ENCODE measurements at regions of chr10 and their contacts with region 1.

Region 1: GRCh38 chr10:87079106-87079836 is 15.4 kb downstream of the GLUD1 start:
- DNase-seq: no peak
- H3K4me3 ChIP-seq: no peak overlapping the region
- H3K4me3 Mint-ChIP-seq: no peak overlapping the region
- H3K27ac Mint-ChIP-seq: no peak overlapping the region
- H3K4me1 ChIP-seq: peaks cover 13% of the 10 kb centered on the region; the same call in 1 of the 2 replicates
- H3K4me1 Mint-ChIP-seq: peaks cover 20% of the 10 kb centered on the region
- H3K27me3 ChIP-seq: no peaks in the 10 kb centered on the region
- H3K27me3 Mint-ChIP-seq: no peaks in the 10 kb centered on the region
- CTCF ChIP-seq: no peak

Region 2: GRCh38 chr10:86846088-86846487 is 233.2 kb before region 1 on chr10:
- CTCF ChIA-PET with region 1: no interaction called
- POLR2A ChIA-PET with region 1: no interaction called
- intact Hi-C with region 1: no loop called
- DNase-seq: no peak
- H3K4me3 ChIP-seq: no peak overlapping the region
- H3K4me3 Mint-ChIP-seq: no peak overlapping the region
- H3K27ac Mint-ChIP-seq: no peak overlapping the region
- H3K4me1 ChIP-seq: no peaks in the 10 kb centered on the region
- H3K4me1 Mint-ChIP-seq: peaks cover 10% of the 10 kb centered on the region
- H3K27me3 ChIP-seq: no peaks in the 10 kb centered on the region
- H3K27me3 Mint-ChIP-seq: no peaks in the 10 kb centered on the region
- CTCF ChIP-seq: no peak

Region 3: DNA sequence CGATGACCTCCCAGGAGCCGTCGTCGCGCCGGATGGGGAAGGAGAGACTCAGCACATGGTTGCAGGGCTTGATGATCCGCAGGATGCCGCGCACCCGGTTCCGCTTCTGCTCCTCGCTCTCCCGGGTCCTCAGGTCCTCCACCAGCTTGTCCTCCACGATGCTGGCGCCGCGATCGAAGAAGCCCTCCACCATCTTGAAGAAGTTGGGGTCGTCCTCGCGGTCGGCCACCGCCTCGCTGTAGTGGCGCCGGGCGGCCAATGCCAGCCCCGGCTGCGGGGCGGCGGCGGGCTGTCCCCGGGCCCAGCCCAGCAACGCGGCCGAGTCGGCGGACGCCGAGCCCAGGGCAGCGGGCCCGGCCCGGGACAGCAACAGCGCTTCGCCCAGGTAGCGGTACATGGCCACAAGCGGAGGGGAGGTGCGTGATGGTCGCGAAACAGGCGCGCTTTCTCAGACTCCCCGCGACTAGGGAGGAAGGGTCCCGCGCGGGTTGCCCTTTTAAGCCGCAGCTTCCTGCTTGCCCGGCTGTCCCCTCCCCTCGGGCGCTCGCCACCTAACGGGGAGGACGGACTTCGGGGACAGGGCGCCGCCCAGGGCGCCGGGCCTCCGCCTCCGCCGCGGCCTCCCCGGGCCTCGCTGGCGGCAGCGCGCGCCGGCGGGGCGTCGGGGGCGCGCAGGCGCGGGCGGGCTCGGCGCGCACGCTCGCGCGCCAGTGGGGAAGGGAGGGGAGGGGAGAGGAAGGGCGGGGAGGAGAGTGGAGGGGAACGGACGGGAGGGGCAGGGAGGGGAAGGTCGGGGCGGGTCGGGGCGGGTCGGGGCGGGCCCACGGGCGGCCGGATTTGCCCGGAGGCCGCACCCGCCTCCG is 15.3 kb after region 1 on chr10 and contains the starts of genes GLUD1 and SHLD2:
- CTCF ChIA-PET with region 1: no interaction called
- POLR2A ChIA-PET with region 1: interaction called, 10 read pairs
- intact Hi-C with region 1: no loop called
- DNase-seq: peak; percentile 96 to 97
- H3K4me3 ChIP-seq: peak within 1 kb of the TSS; percentile 96
- H3K4me3 Mint-ChIP-seq: peak within 1 kb of the TSS; percentile 88
- H3K27ac Mint-ChIP-seq: peak within 1 kb of the TSS; percentile 77
- H3K4me1 ChIP-seq: peaks cover 33% of the 10 kb centered on the region
- H3K4me1 Mint-ChIP-seq: peaks cover 24% of the 10 kb centered on the region
- H3K27me3 ChIP-seq: no peaks in the 10 kb centered on the region
- H3K27me3 Mint-ChIP-seq: no peaks in the 10 kb centered on the region
- CTCF ChIP-seq: peak in 1 of 2 experiments; percentile 4
- total RNA-seq, gene GLUD1: 767 and 787 TPM in 2 replicates
- total RNA-seq, gene SHLD2: 49.3 and 51.0 TPM in 2 replicates

Region 4: DNA sequence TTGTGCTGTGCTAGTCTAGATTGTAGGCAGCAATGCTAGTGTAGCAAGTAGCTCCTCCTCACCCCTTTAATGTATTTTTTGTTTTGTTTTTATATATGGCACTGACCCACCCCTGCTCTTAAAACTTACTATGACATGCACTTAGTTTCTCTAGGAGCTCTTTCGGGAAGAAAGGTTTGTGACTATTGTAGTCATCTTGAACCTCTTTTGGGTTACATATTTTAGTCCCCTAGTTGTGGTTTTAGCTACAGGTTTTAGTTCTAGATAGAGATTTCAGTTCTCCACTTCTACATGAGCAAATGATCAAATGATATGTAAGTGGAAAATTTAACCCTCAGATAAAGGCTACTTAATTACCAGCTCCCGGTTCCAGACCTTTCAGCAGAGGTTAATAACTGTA is 440.3 kb after region 1 on chr10:
- CTCF ChIA-PET with region 1: no interaction called
- POLR2A ChIA-PET with region 1: no interaction called
- intact Hi-C with region 1: no loop called
- DNase-seq: no peak
- H3K4me3 ChIP-seq: no peak overlapping the region
- H3K4me3 Mint-ChIP-seq: no peak overlapping the region
- H3K27ac Mint-ChIP-seq: no peak overlapping the region
- H3K4me1 ChIP-seq: no peaks in the 10 kb centered on the region
- H3K4me1 Mint-ChIP-seq: no peaks in the 10 kb centered on the region
- H3K27me3 ChIP-seq: no peaks in the 10 kb centered on the region
- H3K27me3 Mint-ChIP-seq: no peaks in the 10 kb centered on the region
- CTCF ChIP-seq: no peak

Measured in Caco-2 (cell line).